PC-9 (cell line): ENCODE measurements at regions of chr19 and their contacts with region 1.

Region 1: GRCh38 chr19:34489175-34489574 is 7.6 kb downstream of the WTIP start:
- DNase-seq: no peak
- H3K4me3 ChIP-seq: no peak overlapping the region
- H3K27ac ChIP-seq: no peak overlapping the region
- H3K4me1 ChIP-seq: no peaks in the 10 kb centered on the region
- H3K27me3 ChIP-seq: no peaks in the 10 kb centered on the region
- CTCF ChIP-seq: no peak

Region 2: DNA sequence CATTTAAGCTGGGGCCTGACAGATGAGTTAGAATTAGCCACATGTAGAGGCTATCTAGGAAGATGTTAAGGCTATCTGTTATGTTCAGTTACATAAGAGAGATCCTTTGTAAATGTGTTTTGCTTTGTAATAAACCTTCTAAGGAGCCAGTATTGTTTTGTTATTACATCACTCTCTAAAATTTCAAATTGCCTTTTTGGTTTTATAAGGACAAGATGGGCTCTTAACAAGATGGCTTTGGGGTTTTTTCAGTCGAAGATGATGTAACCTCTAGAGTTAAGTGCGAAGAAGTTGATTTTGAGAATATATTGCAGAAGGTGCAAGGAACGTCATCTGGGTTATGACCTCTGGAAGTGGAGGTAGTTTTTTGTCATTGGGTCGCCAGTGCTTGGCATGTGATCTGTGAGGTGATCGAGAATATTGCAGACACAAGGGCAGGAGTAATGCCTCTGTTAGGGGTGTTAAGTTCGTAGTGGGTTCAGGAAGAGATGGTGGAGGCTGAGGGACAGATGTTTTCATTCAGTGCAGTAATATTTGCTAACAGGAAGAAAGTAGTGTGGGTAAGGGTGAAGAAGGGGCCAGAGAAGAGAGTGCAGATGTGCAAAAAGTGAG is 304.2 kb before region 1 on chr19:
- CTCF ChIA-PET with region 1: no interaction called
- POLR2A ChIA-PET with region 1: no interaction called
- intact Hi-C with region 1: loop called (anchors 5 kb)
- DNase-seq: no peak
- H3K4me3 ChIP-seq: no peak overlapping the region
- H3K27ac ChIP-seq: no peak overlapping the region
- H3K4me1 ChIP-seq: peaks cover 29% of the 10 kb centered on the region
- H3K27me3 ChIP-seq: no peaks in the 10 kb centered on the region
- CTCF ChIP-seq: no peak